ENCODE measurements at regions of chr19 and their contacts with region 1.

Region 1: DNA sequence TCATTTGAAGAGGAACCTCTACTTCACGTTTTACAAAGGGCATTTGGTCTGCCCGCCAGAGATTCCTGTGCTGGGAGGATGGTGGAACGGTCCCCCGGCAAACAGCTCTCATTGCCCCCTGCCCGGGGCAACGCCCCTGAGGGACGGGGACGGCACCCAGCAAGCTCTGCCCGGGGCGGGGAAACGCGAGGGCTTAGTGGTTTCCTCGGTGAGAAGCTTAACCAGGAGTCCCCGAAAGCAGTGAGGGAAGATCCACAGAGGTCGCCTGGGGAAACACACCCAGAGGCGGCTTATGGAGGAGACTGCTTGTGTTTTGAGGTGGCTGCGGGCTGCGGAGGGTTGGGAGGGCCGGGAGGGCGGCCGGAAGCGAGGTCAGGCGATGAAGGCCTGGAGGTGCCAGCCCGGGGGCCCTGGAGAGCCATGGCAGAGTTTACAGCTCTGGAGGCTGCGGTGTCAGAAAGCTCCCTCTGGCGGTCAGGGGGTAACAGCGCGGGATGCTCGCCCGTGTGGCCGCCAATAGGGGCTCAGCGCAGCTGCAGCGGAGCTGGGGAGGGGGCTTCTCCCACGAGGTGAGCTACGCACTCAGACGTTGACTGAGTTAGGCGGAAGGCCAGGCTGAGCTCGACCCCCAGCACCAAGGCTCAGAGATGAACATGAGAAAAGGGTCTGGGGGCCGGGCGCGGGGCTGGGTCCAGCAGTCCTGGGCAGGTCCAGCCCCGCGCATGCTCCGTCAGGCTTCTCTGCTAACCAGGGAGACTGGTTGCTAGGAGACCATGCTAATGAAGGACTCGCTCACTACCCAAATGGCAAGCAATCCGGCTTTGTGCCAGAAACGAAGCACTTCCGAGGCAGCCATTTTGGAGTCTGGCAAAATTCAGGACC is 652 bp upstream of the TPGS1 start:
- DNase-seq: peak; percentile 92 to 94
- H3K4me3 ChIP-seq: peak overlapping the region; percentile 79 to 86 (median 80)
- H3K27ac ChIP-seq: peak overlapping the region; percentile 97
- H3K4me1 ChIP-seq: peaks cover 0 to 12% (median 8%) of the 10 kb centered on the region in 4 experiments; a peak in 5 of 7 replicates
- H3K27me3 ChIP-seq: no peaks in the 10 kb centered on the region; a peak in 2 of 7 replicates
- CTCF ChIP-seq: peak; percentile 93 to 99 (median 97)
- EP300 ChIP-seq: peak in 1 of 2 experiments; percentile 49; a peak in 1 of 3 replicates
- POLR2A ChIP-seq: 0 out of 3 replicates have a peak, but pooled peaks of 1 of the 2 experiments have one; percentile 47
- RAD21 ChIP-seq: peak; percentile 57 to 66

Region 2: GRCh38 chr19:419721-420515 is 86.7 kb before region 1 on chr19:
- CTCF ChIA-PET with region 1: no interaction called
- POLR2A ChIA-PET with region 1: no interaction called
- DNase-seq: peak in 1 of 2 experiments; percentile 43
- H3K4me3 ChIP-seq: no peak overlapping the region
- H3K27ac ChIP-seq: no peak overlapping the region
- H3K4me1 ChIP-seq: peaks cover 0 to 15% (median 10%) of the 10 kb centered on the region in 4 experiments; a peak in 6 of 7 replicates
- H3K27me3 ChIP-seq: no peaks in the 10 kb centered on the region
- CTCF ChIP-seq: no peak
- EP300 ChIP-seq: no peak
- POLR2A ChIP-seq: no peak
- RAD21 ChIP-seq: no peak

Region 3: GRCh38 chr19:444677-445210 is 61.9 kb before region 1 on chr19:
- CTCF ChIA-PET with region 1: no interaction called
- POLR2A ChIA-PET with region 1: no interaction called
- DNase-seq: no peak
- H3K4me3 ChIP-seq: no peak overlapping the region
- H3K27ac ChIP-seq: no peak overlapping the region
- H3K4me1 ChIP-seq: peaks cover 0 to 5% (median 0%) of the 10 kb centered on the region in 4 experiments; a peak in 1 of 7 replicates
- H3K27me3 ChIP-seq: no peaks in the 10 kb centered on the region
- CTCF ChIP-seq: no peak
- EP300 ChIP-seq: no peak
- POLR2A ChIP-seq: no peak
- RAD21 ChIP-seq: no peak

Region 4: DNA sequence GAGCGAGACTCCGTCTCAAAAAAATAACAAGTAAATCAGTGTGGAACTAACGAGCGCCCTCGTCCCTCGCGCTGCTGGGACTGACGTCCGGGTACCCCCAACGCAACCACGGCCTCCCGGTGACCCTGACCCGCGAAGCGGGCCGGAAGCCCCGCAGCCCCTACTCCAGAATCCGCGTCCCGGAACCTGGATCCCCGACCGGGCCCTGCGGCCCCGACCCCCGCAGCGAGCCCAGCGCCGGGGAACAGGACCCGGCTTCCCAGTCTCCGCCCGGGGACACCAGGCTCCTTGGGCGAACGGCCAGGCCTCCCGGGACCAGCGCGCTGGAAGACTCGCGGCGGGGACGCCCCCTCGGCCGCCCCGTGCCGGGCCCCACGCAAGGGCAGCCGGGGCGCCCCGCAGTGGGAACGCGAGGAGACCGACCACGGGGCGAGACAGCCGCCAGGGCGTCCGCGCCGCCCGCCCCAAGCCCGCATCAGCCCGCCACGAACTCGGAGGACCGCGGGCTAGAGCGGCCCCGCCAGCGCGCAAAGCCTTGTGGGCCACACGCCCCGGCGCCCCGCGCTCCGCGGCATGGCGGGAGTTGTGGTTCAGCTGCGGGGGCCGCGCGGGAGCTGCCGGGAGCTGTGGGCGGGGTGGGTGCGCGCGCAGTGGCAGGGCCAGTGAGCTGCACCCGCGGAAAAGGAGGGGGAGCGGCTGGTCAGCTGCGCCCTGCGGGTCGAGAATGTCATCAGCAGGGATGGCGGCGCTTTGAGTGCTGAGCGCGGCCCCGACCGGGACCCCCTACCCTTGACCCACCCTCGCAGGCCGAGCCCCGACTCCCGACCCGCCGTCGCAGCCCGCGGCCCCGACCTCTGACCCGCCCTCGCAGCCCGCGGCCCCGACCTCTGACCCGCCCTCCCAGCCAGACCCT is 17.9 kb before region 1 on chr19:
- CTCF ChIA-PET with region 1: interaction called, 21 read pairs
- POLR2A ChIA-PET with region 1: interaction called, 6 read pairs
- DNase-seq: peak; percentile 60 to 97
- H3K4me3 ChIP-seq: peak overlapping the region; percentile 62 to 85 (median 76)
- H3K27ac ChIP-seq: peak overlapping the region; percentile 48; the same call in 1 of the 2 replicates
- H3K4me1 ChIP-seq: peaks cover 0 to 16% (median 10%) of the 10 kb centered on the region in 4 experiments; a peak in 6 of 7 replicates
- H3K27me3 ChIP-seq: no peaks in the 10 kb centered on the region; a peak in 2 of 7 replicates
- CTCF ChIP-seq: no peak
- EP300 ChIP-seq: no peak
- POLR2A ChIP-seq: peak in 1 of 2 experiments; percentile 58; a peak in 1 of 3 replicates
- RAD21 ChIP-seq: no peak

Region 5: DNA sequence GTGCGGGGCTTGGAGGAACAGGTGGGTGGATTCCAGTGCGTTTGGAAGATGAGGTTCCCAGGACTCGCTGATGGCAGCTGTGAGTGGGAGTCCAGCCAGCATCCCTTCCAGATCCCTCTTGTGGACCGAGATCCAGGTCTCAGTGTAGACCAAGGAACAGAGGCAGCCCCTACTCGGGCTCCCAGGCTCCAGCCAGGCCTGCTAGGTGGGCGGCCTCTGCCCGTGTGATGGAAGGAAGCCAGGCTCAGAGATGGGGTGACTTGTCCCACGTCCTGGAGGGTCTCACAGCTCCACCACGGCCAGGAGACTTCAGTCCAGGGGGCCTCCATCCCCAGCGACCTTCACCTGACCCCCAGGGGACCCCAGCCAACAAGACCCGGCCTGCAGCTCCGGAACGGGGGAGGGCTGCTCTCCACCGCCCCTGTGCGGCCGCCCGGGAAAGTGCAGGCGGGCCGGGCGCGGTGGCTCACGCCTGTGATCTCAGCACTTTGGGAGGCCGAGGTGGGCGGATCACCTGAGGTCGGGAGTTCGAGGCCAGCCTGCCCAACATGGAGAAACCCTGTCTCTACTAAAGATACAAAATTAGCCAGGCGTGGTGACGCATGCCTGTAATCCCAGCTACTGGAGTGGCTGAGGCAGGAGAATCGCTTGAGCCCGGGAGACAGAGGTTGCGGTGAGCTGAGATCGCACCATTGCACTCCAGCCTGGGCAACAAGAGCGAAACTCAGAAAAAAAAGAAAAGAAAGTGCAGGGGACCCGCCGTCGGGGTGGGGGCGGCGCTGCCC is 11.1 kb before region 1 on chr19:
- CTCF ChIA-PET with region 1: interaction called, 21 read pairs
- POLR2A ChIA-PET with region 1: interaction called, 8 read pairs
- DNase-seq: peak in 1 of 2 experiments; percentile 98
- H3K4me3 ChIP-seq: peak overlapping the region in 2 of 4 experiments; percentile 8 to 74; a peak in 2 of 8 replicates
- H3K27ac ChIP-seq: no peak overlapping the region
- H3K4me1 ChIP-seq: peaks cover 0 to 13% (median 9%) of the 10 kb centered on the region in 4 experiments; a peak in 5 of 7 replicates
- H3K27me3 ChIP-seq: peaks cover 19 to 26% (median 22%) of the 10 kb centered on the region in 4 experiments
- CTCF ChIP-seq: peak; percentile 79 to 82 (median 80)
- EP300 ChIP-seq: no peak
- POLR2A ChIP-seq: no peak
- RAD21 ChIP-seq: peak; percentile 46 to 59

Region 6: DNA sequence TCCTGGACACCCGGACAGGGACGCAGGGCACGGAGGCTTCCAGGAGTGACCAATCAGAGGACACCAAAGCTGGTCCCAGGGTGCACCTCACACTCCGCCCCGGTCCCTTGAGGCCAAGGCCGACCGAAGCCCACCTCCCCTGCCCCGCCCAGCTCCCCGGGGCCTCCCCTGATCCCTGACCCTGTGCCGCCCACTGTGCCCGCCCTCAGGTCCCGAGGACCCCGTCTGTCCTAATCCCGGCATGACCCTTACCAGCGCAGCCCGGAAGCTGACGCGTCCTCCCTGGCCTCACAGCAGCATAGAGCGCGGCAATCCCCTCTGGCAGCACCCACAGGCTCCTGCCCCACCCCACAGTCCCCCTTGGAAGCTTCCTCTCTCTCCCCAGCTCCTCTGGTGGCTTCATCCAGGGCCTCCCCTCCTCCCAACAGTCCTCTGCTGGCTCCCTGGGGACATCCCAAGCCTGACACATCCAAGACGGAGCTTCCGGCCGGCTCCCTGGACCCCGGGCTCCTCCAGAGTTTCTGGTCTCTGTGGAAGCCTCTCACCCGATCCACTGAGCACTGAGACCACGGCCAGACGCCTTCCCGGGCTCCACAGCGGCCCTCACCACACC is 17.5 kb after region 1 on chr19:
- CTCF ChIA-PET with region 1: interaction called, 31 read pairs
- POLR2A ChIA-PET with region 1: interaction called, 5 read pairs
- DNase-seq: no peak
- H3K4me3 ChIP-seq: no peak overlapping the region
- H3K27ac ChIP-seq: no peak overlapping the region
- H3K4me1 ChIP-seq: peaks cover 0 to 3% (median 0%) of the 10 kb centered on the region in 4 experiments; a peak in 2 of 7 replicates
- H3K27me3 ChIP-seq: peaks cover 0 to 5% (median 0%) of the 10 kb centered on the region in 4 experiments; a peak in 1 of 7 replicates
- CTCF ChIP-seq: no peak
- EP300 ChIP-seq: no peak
- POLR2A ChIP-seq: no peak
- RAD21 ChIP-seq: no peak

Measured in H1 (cell line).